Panc1 (cell line): ENCODE measurements at regions of chr16 and their contacts with region 1.

Region 1: GRCh38 chr16:83653785-83654184 is 154.0 kb upstream of the HSBP1 start:
- DNase-seq: no peak
- ATAC-seq: no peak
- H3K4me3 ChIP-seq: no peak overlapping the region
- H3K27ac ChIP-seq: no peak overlapping the region
- H3K4me1 ChIP-seq: no peaks in the 10 kb centered on the region
- H3K27me3 ChIP-seq: no peaks in the 10 kb centered on the region
- CTCF ChIP-seq: no peak

Region 2: GRCh38 chr16:83574388-83574787 is 79.4 kb before region 1 on chr16:
- CTCF ChIA-PET with region 1: no interaction called
- POLR2A ChIA-PET with region 1: no interaction called
- in situ Hi-C with region 1: no loop called
- intact Hi-C with region 1: no loop called
- DNase-seq: no peak
- ATAC-seq: no peak
- H3K4me3 ChIP-seq: no peak overlapping the region
- H3K27ac ChIP-seq: no peak overlapping the region
- H3K4me1 ChIP-seq: no peaks in the 10 kb centered on the region
- H3K27me3 ChIP-seq: no peaks in the 10 kb centered on the region; the same call in 1 of the 2 replicates
- CTCF ChIP-seq: no peak

Region 3: GRCh38 chr16:84396537-84397008 is 742.8 kb after region 1 on chr16:
- CTCF ChIA-PET with region 1: no interaction called
- POLR2A ChIA-PET with region 1: interaction called, 13 read pairs
- in situ Hi-C with region 1: no loop called
- intact Hi-C with region 1: no loop called
- DNase-seq: no peak
- ATAC-seq: no peak
- H3K4me3 ChIP-seq: no peak overlapping the region
- H3K27ac ChIP-seq: no peak overlapping the region
- H3K4me1 ChIP-seq: no peaks in the 10 kb centered on the region
- H3K27me3 ChIP-seq: peaks cover 3% of the 10 kb centered on the region; the same call in 1 of the 2 replicates
- CTCF ChIP-seq: no peak